ENCODE measurements at regions of chr17 and their contacts with region 1.

Region 1: DNA sequence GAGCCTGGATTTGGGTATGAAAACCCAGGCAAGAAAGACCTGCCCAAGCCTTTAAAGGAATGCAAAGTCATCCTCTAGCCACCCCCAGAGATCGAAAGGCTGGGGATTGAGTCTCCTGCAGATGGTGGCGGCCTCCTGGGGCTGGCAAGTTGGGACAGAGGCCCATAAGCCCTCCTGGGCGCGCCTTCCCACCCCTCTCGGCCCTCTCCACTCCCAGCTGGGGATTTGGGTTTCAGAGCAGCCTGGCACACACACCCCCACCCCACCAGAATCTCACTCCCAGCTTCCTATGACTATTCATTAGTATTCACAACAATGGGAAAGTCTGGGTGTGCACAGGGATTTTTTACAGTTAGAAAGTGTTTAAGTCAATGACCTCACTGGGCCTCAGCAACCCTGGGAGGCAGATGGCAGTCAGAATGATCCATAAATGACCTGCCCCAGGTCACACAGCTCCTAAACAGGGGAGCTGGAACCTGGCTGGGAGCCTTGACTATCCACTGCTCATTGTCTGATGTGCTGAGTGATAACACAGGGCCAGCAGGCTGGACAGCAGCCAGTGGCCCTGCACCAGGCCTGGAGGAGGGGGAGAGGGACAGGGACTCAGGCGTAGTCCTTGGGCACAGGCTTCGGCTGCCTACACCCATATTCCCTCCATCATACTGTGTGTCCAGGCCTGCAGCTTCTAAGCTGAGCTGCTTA is 12.1 kb downstream of the NHERF1 start:
- DNase-seq: no peak
- H3K4me3 ChIP-seq: no peak overlapping the region
- H3K27ac ChIP-seq: peak overlapping the region; percentile 14 to 39
- H3K4me1 ChIP-seq: peaks cover 60% of the 10 kb centered on the region
- H3K27me3 ChIP-seq: no peaks in the 10 kb centered on the region
- CTCF ChIP-seq: no peak
- POLR2A ChIP-seq: no peak

Region 2: DNA sequence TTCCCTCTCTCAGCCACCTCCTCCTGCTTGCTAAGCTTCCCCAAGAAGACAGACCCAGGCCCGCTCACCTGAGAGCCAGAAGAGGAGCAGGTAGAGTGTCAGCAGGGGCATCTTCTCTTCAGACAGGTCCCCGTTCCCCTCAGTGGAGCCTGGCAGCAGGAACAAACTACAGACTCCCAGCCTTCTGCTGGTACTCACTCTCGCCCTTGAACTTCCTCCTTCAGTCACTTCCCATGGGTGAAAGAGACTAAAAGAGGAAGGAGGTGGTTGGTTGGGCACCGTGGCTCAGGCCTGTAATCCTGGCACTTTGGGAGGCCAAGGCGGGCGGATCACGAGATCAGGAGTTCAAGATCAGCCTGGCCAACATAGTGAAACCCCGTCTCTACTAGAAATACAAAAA is 47.8 kb before region 1 on chr17 and contains the start of gene CD300LF:
- intact Hi-C with region 1: loop called (anchors 5 kb)
- DNase-seq: no peak
- H3K4me3 ChIP-seq: no peak within 1 kb of the TSS
- H3K27ac ChIP-seq: no peak within 1 kb of the TSS
- H3K4me1 ChIP-seq: no peaks in the 10 kb centered on the region
- H3K27me3 ChIP-seq: no peaks in the 10 kb centered on the region
- CTCF ChIP-seq: no peak
- POLR2A ChIP-seq: no peak
- total RNA-seq, gene CD300LF: 0.43 to 1.1 TPM

Region 3: DNA sequence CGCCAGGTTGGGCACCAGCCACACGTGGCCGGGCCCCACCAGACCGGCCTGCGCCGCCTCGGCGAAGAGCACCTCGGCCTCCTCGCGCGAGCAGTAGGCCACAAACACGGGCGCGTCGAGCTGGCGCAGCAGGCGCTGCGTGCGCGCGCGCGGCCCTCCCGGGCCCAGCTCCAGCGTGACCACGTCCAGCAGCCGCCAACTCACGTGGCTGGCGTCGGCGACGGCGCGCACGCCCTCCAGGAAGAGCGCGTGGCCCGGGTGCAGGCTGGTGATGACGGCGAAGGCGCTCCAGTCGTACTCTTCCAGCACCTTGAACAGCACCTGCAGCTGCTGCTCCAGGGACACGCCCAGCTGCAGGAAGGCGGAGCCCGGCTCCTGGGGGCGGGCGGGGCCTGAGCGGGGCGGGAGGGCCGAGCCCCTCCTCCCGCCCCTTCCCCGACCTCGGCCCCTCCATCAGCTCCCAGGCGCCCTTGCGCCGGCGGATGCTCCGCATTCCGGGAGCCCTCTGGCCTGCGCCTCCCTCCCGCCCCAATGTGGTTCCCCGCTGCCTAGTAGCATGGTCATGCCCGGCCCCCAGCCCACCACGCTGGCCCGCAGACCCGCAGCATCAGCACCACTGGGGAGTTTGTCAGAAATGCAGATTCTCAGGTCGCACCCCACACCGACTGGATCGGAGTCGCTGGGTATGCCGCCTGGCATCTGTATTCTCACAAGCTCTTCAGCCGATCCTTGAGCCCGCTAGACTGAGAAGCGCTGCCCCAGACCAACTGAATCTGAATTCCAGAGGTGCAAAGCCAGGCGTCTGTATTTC is 91.9 kb after region 1 on chr17:
- intact Hi-C with region 1: no loop called
- DNase-seq: no peak
- H3K4me3 ChIP-seq: peak overlapping the region; percentile 34 to 38
- H3K27ac ChIP-seq: no peak overlapping the region
- H3K4me1 ChIP-seq: no peaks in the 10 kb centered on the region
- H3K27me3 ChIP-seq: no peaks in the 10 kb centered on the region
- CTCF ChIP-seq: no peak
- POLR2A ChIP-seq: no peak

Measured in testis (tissue), 5 donors.